ENCODE measurements at regions of chr10 and their contacts with region 1.

Region 1: GRCh38 chr10:104580774-104581675 is 60.1 kb upstream of the SORCS3 start:
- DNase-seq: peak; percentile 36 to 94
- H3K4me3 ChIP-seq: no peak overlapping the region
- H3K27ac ChIP-seq: no peak overlapping the region
- H3K4me1 ChIP-seq: no peaks in the 10 kb centered on the region
- H3K27me3 ChIP-seq: no peaks in the 10 kb centered on the region; a peak in 1 of 7 replicates
- CTCF ChIP-seq: peak; percentile 77 to 92 (median 87)
- EP300 ChIP-seq: no peak
- POLR2A ChIP-seq: no peak
- RAD21 ChIP-seq: peak; percentile 82 to 88

Region 2: DNA sequence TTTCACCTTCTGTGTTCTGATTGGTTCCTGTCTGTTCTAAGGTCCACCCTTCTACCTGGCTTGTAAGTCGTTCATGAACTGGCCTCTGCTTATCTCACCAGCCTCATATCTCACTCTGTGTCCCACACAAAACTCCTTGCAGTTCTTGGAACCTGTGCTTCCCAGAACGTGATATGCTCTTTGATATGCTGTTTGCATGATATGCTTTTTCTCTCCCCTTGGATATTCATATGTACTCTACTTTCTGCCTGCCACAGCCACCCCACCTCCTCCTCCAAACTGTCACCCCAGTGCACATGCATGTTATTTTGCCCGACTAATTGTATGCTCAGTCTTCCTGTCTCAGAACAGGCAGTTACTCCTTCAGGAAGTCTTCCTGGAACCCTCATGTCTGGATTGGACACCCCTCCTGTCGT is 240.9 kb before region 1 on chr10:
- CTCF ChIA-PET with region 1: no interaction called
- POLR2A ChIA-PET with region 1: no interaction called
- DNase-seq: no peak
- H3K4me3 ChIP-seq: no peak overlapping the region
- H3K27ac ChIP-seq: no peak overlapping the region
- H3K4me1 ChIP-seq: peaks cover 12 to 21% (median 16%) of the 10 kb centered on the region in 4 experiments; a peak in 6 of 7 replicates
- H3K27me3 ChIP-seq: peaks cover 0 to 2% (median 0%) of the 10 kb centered on the region in 4 experiments; a peak in 1 of 7 replicates
- CTCF ChIP-seq: no peak
- EP300 ChIP-seq: no peak
- POLR2A ChIP-seq: no peak
- RAD21 ChIP-seq: no peak

Region 3: GRCh38 chr10:104485632-104486031 is 95.4 kb before region 1 on chr10:
- CTCF ChIA-PET with region 1: interaction called, 10 read pairs
- POLR2A ChIA-PET with region 1: no interaction called
- DNase-seq: no peak
- H3K4me3 ChIP-seq: no peak overlapping the region
- H3K27ac ChIP-seq: no peak overlapping the region
- H3K4me1 ChIP-seq: 0 out of 7 replicates have a peak, but pooled peaks cover 0 to 2% (median 1%) of the 10 kb centered on the region in 4 experiments
- H3K27me3 ChIP-seq: no peaks in the 10 kb centered on the region
- CTCF ChIP-seq: peak in 2 of 3 experiments; percentile 43 to 66; a peak in 3 of 4 replicates
- EP300 ChIP-seq: no peak
- POLR2A ChIP-seq: no peak
- RAD21 ChIP-seq: peak; percentile 8 to 31; a peak in 2 of 4 replicates

Region 4: DNA sequence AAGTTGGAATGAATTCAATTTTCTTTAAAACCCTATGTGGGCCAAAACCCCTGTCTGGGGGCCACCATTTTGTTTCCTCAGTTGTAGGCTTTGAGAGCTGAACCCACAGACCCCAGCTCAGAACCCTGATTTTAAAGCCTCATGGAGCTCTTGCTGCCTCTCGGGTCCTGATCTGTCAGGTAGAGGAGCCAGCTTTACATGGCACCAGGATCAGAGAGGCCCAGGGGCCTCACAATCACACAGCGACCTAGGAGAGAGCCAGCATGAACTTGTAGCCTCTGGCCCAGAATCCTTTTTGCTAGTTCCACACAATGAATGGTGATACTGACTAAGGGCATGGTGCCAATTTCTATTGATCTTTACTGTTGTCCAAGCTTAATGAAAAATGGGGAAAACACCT is 24.2 kb before region 1 on chr10:
- CTCF ChIA-PET with region 1: interaction called, 12 read pairs
- POLR2A ChIA-PET with region 1: no interaction called
- DNase-seq: no peak
- H3K4me3 ChIP-seq: no peak overlapping the region
- H3K27ac ChIP-seq: no peak overlapping the region
- H3K4me1 ChIP-seq: no peaks in the 10 kb centered on the region
- H3K27me3 ChIP-seq: no peaks in the 10 kb centered on the region
- CTCF ChIP-seq: no peak
- EP300 ChIP-seq: no peak
- POLR2A ChIP-seq: no peak
- RAD21 ChIP-seq: no peak

Region 5: DNA sequence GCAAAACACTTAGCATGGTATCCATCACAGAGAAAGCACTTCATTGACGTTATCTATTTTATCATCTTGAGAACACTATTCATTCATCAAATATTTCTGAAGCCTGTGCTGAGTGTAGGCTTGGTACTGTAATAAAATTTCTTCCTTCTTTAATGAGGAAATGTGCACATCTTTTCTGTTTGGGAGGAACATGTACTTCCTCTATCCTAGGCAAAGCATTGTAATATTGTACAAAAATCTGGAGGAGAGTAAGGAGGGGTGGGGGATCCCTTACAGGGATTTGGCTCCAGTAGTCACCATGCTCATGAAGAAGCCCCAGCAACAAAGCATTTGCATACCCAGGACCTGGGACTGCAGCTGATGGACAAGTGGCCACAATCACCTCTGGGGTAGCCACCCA is 20.1 kb after region 1 on chr10:
- CTCF ChIA-PET with region 1: interaction called, 10 read pairs
- POLR2A ChIA-PET with region 1: no interaction called
- DNase-seq: no peak
- H3K4me3 ChIP-seq: no peak overlapping the region
- H3K27ac ChIP-seq: no peak overlapping the region
- H3K4me1 ChIP-seq: no peaks in the 10 kb centered on the region; a peak in 1 of 7 replicates
- H3K27me3 ChIP-seq: no peaks in the 10 kb centered on the region
- CTCF ChIP-seq: no peak
- EP300 ChIP-seq: no peak
- POLR2A ChIP-seq: no peak
- RAD21 ChIP-seq: no peak

Region 6: DNA sequence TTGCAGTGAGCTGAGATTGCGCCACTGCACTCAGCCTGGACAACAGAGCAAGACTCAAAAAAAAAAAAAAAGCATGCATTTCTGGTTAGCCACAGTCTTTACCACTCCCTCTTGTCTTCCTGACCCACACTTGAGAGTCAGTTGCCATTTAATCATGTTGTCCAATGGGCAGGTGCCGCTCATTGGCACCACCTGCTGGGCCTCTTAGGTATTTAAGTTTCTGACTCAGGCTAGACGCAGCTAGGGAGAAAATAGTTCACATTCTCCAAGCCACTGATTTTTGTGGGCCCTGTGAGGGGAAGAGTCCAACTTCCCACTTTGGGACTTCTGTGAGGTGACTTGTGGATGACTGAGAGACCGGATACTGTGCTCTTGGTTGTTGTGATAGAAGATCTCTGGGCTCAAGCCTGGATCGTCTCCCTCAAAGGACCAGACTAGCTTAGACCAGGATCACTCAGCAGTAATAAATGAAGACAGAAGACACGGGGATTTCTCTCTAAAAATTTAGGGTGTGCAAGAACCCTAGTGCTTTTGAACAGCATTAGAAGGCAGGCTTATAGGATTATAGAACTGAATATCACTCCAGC is 33.3 kb after region 1 on chr10:
- CTCF ChIA-PET with region 1: interaction called, 101 read pairs
- POLR2A ChIA-PET with region 1: no interaction called
- DNase-seq: peak in 1 of 2 experiments; percentile 82
- H3K4me3 ChIP-seq: no peak overlapping the region
- H3K27ac ChIP-seq: no peak overlapping the region
- H3K4me1 ChIP-seq: no peaks in the 10 kb centered on the region
- H3K27me3 ChIP-seq: no peaks in the 10 kb centered on the region
- CTCF ChIP-seq: peak; percentile 49 to 71 (median 66)
- EP300 ChIP-seq: no peak
- POLR2A ChIP-seq: no peak
- RAD21 ChIP-seq: peak; percentile 56 to 71

Measured in H1 (cell line).